Activated CD4-positive, alpha-beta T cell treated with anti-CD3 and anti-CD28 coated beads, Interleukin-2, amount 10 ng/mL, durations not matched to agents 24 days and 14 days (primary cell): ENCODE measurements at regions of chr10 and their contacts with region 1.

Region 1: DNA sequence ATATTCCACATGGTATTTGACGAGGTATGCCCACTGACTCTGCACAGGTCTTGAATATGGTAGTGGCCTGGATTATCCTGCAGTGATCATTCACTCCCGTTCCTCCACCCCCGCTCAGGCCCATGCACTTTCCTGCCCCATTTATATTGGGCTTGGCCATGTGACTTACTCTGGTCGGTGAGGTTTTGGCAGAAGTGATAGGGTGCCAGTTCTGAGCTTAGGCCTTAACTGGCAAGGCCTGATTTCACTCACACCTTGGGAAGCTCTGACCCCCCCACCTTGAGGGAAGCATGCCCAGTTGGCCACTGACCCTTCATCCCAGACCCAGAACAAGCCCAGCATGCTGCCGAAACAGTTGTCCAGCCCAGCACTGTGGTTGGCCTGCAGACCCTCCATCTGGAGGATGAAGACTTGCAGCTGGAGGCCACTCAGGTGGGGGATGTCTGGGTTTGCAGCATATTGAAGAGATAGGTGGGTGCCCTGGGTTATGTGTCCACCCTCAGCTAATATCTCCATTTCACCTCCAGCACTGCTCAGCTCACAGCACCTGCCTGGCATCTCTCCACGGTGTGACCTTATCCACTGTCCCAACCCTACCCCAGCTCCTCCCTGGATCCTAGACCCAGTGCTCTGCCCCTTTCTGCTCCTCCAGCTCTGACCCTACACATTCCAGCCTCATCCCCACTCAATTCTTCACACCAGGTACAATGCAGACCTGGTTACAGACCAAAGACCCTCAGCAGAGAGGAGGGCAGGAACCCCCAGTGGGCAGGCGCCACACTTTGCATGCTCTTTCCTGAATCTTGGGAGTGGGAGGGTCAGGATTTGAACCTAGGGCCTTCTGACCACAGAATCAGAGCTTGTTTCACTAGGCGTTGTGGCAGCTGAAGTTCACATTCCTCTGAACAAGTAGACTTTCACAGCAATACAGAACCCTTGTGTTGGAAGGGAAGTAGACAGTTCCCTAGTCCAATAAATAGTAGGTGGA is 138.1 kb upstream of the CHST15 start:
- DNase-seq: peak; percentile 89
- H3K4me3 Mint-ChIP-seq: no peak overlapping the region
- H3K27ac Mint-ChIP-seq: peak overlapping the region; percentile 62
- H3K4me1 Mint-ChIP-seq: no peaks in the 10 kb centered on the region
- H3K27me3 Mint-ChIP-seq: no peaks in the 10 kb centered on the region

Region 2: GRCh38 chr10:124194199-124194824 is 37.1 kb before region 1 on chr10:
- intact Hi-C with region 1: no loop called
- DNase-seq: no peak
- H3K4me3 Mint-ChIP-seq: no peak overlapping the region
- H3K27ac Mint-ChIP-seq: no peak overlapping the region
- H3K4me1 Mint-ChIP-seq: peaks cover 3% of the 10 kb centered on the region
- H3K27me3 Mint-ChIP-seq: peaks cover 28% of the 10 kb centered on the region

Region 3: DNA sequence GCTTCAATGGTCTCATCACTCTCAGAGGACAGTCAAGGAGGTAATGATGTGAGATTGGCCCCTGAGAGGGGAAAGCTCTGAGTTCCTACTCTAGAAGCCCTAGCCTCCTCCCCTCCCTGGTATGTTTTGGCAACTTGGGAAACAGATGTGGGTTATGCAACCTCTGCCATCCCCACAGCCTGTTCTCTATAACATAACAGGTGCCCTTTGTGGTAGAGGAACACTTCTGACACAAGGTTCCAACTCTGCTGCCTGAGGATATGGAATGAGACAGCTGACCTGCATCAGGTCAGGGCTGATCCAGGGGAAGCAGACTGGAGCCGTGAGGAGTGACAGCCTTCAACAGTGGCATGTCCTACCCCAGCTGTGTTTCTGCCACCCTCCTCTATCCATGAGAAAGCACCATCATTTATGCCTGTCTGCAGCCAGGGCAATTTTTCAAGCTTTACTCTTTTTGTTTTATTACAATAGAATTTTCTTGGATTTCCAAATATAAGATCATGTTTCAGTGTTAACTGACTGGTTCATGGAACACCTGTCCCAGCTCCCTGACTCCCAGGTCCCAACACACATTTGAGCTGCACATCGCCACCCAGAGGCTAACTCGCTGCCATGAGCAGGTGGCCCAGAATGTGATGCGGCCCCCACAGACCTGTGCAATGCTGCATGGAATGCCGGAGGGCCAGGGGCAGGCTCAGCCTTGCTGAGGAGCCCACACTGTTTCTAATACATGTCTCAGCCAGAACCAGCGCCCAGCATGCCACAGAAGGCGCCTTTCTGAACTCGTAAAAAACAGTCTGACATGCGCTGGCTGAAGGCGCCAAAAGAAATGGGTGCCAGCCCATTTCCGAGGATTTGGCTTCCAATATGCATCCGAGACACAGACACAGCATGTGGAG is 13.3 kb before region 1 on chr10:
- intact Hi-C with region 1: no loop called
- DNase-seq: no peak
- H3K4me3 Mint-ChIP-seq: no peak overlapping the region
- H3K27ac Mint-ChIP-seq: no peak overlapping the region
- H3K4me1 Mint-ChIP-seq: peaks cover 20% of the 10 kb centered on the region
- H3K27me3 Mint-ChIP-seq: peaks cover 8% of the 10 kb centered on the region

Region 4: GRCh38 chr10:124259139-124259825 is 27.8 kb after region 1 on chr10:
- intact Hi-C with region 1: no loop called
- DNase-seq: peak; percentile 60
- H3K4me3 Mint-ChIP-seq: no peak overlapping the region
- H3K27ac Mint-ChIP-seq: no peak overlapping the region
- H3K4me1 Mint-ChIP-seq: no peaks in the 10 kb centered on the region
- H3K27me3 Mint-ChIP-seq: no peaks in the 10 kb centered on the region

Region 5: GRCh38 chr10:124470544-124471434 is 239.3 kb after region 1 on chr10:
- intact Hi-C with region 1: loop called (anchors 5 kb)
- DNase-seq: no peak
- H3K4me3 Mint-ChIP-seq: no peak overlapping the region
- H3K27ac Mint-ChIP-seq: no peak overlapping the region
- H3K4me1 Mint-ChIP-seq: peaks cover 5% of the 10 kb centered on the region
- H3K27me3 Mint-ChIP-seq: no peaks in the 10 kb centered on the region